Breast epithelium (tissue), 4 donors: ENCODE measurements at regions of chr20 and their contacts with region 1.

Region 1: DNA sequence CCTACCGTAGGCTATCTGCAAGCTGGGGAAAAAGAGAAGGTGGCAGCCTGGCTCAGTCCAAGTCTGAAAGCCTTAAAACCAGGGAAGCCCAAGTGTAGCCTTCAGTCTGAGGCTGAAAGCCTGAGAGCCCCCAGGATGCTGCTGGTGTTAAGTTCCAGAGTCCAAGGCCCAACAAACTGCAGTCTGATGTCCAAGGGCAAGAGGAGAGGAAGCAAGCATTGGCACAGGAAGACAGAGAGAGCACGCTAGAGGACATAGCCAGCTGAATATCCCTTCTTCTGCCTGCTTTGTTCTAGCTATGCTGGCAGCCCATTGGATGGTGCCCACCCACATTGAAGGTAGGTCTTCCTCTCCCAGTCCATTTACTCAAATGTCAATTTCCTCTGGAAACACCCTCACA is 12.1 kb upstream of the L3MBTL1 start:
- DNase-seq: no peak
- H3K4me3 ChIP-seq: no peak overlapping the region
- H3K27ac ChIP-seq: no peak overlapping the region
- H3K4me1 ChIP-seq: no peaks in the 10 kb centered on the region
- H3K27me3 ChIP-seq: no peaks in the 10 kb centered on the region
- CTCF ChIP-seq: no peak
- POLR2A ChIP-seq: no peak

Region 2: DNA sequence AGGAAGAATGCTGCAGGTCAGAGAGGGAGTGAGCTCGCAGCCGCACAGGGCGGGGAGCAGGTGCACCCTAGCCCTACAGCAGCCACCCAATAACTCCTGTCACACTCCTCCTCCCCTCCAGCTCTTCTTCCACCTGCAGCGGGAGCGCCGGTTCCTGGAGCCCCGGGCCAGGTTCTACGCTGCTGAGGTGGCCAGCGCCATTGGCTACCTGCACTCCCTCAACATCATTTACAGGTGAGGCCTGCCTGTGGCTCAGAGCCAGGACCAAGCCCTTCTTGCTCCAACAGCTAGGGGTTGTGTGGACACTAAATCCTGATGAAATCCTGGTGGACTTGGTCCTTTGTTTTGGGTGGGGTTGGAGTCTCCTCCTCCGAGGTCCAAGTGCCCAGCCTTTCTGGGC is 75.1 kb after region 1 on chr20:
- intact Hi-C with region 1: loop called (anchors 2 kb)
- DNase-seq: no peak
- H3K4me3 ChIP-seq: no peak overlapping the region
- H3K27ac ChIP-seq: no peak overlapping the region
- H3K4me1 ChIP-seq: no peaks in the 10 kb centered on the region
- H3K27me3 ChIP-seq: no peaks in the 10 kb centered on the region
- CTCF ChIP-seq: no peak
- POLR2A ChIP-seq: no peak